ENCODE measurements at regions of chr9 and their contacts with region 1.

Region 1: GRCh38 chr9:123174887-123175518 is 93.4 kb downstream of the STRBP start:
- DNase-seq: no peak
- H3K4me3 ChIP-seq: no peak overlapping the region
- H3K27ac ChIP-seq: no peak overlapping the region
- H3K27me3 ChIP-seq: no peaks in the 10 kb centered on the region
- CTCF ChIP-seq: no peak

Region 2: GRCh38 chr9:123002754-123003153 is 172.2 kb before region 1 on chr9:
- intact Hi-C with region 1: no loop called
- DNase-seq: no peak
- H3K4me3 ChIP-seq: no peak overlapping the region
- H3K27ac ChIP-seq: peak overlapping the region in 2 of 59 donors; percentile 8 to 9
- H3K27me3 ChIP-seq: no peaks in the 10 kb centered on the region
- CTCF ChIP-seq: no peak

Region 3: DNA sequence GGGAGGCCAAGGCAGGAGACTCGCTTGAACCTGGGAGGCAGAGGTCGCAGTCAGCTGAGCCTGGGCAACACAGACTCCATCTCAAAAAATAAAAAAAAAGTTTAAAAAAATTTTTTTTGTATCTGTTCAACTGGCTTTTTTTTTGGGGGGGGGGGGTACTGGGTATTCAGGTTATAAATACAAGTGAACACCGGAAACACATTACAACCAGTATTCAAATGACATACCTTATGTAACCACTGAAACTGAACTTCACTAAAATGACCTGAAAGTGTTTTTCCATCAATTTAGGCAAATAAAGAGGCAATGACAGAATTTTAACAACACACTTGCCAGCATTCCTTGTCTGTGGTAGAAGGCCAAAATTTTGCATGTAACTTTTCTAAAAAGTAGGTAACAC is 59.9 kb after region 1 on chr9:
- intact Hi-C with region 1: loop called in 1 of 2 experiments (anchors 10 kb)
- DNase-seq: no peak
- H3K4me3 ChIP-seq: no peak overlapping the region
- H3K27ac ChIP-seq: no peak overlapping the region
- H3K27me3 ChIP-seq: no peaks in the 10 kb centered on the region
- CTCF ChIP-seq: no peak